Endothelial cell of umbilical vein (primary cell): ENCODE measurements at regions of chr15 and their contacts with region 1.

Region 1: DNA sequence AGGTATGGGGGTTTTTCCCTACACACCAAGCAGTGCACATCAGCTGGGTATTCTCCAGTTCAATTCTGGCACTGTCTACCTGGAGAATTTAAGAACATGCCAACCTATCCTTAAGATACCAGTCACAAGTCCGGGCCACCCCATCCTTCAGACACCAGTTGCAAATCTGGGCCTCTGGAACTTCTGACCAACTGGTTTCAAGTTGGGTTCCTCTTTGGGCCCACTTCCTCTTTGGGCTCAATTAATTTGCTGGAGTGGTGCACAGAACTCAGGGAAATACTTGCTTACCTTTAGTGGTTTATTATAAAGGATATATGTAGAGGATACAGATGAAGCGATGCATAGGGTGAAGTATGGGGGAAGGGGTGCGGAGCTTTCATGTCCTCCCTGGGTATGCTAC is 25.3 kb downstream of the GLCE start:
- DNase-seq: no peak
- H3K4me3 ChIP-seq: no peak overlapping the region
- H3K27ac ChIP-seq: no peak overlapping the region
- H3K4me1 ChIP-seq: no peaks in the 10 kb centered on the region
- H3K27me3 ChIP-seq: no peaks in the 10 kb centered on the region
- CTCF ChIP-seq: no peak
- POLR2A ChIP-seq: no peak

Region 2: DNA sequence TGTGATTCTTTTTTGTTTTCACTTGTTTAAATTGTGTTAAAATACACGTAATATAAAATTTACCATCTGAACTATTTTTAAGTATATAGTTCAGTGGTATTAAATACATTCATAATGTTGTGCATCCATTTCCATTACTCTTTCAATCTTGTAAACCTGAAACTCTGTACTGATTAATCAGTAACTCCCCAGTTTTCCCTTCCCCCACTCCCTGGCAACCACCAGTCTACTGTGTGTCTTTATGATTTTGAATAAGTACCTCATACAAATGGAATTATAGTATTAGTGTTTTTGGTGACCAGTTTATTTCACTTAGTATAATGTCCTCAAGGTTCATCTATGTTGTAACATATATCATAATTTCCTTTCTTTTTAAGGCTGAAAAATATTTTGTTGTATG is 34.0 kb after region 1 on chr15:
- CTCF ChIA-PET with region 1: no interaction called
- POLR2A ChIA-PET with region 1: no interaction called
- dilution Hi-C with region 1: no loop called
- intact Hi-C with region 1: no loop called
- DNase-seq: no peak
- H3K4me3 ChIP-seq: no peak overlapping the region
- H3K27ac ChIP-seq: no peak overlapping the region
- H3K4me1 ChIP-seq: peaks cover 2% of the 10 kb centered on the region
- H3K27me3 ChIP-seq: no peaks in the 10 kb centered on the region
- CTCF ChIP-seq: no peak
- POLR2A ChIP-seq: no peak

Region 3: GRCh38 chr15:69346112-69346511 is 160.4 kb after region 1 on chr15:
- CTCF ChIA-PET with region 1: no interaction called
- POLR2A ChIA-PET with region 1: interaction called, 10 read pairs
- dilution Hi-C with region 1: no loop called
- intact Hi-C with region 1: no loop called
- DNase-seq: no peak
- H3K4me3 ChIP-seq: no peak overlapping the region
- H3K27ac ChIP-seq: no peak overlapping the region
- H3K4me1 ChIP-seq: no peaks in the 10 kb centered on the region
- H3K27me3 ChIP-seq: no peaks in the 10 kb centered on the region
- CTCF ChIP-seq: no peak
- POLR2A ChIP-seq: no peak